Breast epithelium (tissue), 4 donors: ENCODE measurements at regions of chr1 and their contacts with region 1.

Region 1: DNA sequence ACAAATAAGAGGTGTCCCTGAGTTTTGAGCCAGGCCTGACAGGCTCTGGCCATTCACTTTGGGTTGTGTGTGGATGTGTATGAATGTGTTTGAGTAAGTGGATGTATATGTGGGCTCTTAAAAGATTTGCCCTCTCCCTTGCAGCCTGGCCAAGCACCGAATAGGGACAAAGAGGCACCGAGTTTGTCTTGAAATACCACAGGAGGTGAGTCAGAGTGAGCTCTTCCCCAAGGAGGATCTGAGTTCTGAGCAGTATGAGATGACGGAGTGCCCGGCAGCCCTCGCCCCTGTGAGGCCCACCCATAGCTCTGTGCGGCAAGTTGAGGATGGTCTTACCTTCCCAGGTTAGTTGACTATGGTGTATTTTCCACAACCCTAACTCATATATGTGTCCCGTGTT is 19.0 kb downstream of the KDM4A start:
- DNase-seq: no peak
- H3K4me3 ChIP-seq: no peak overlapping the region
- H3K27ac ChIP-seq: no peak overlapping the region
- H3K4me1 ChIP-seq: no peaks in the 10 kb centered on the region
- H3K27me3 ChIP-seq: no peaks in the 10 kb centered on the region
- CTCF ChIP-seq: no peak
- POLR2A ChIP-seq: no peak

Region 2: GRCh38 chr1:42657971-42658879 is 1010.7 kb before region 1 on chr1 and contains the start of gene PPIH:
- intact Hi-C with region 1: loop called (anchors 5 kb)
- DNase-seq: peak; percentile 91 to 95
- H3K4me3 ChIP-seq: peak within 1 kb of the TSS; percentile 76 to 86 (median 77)
- H3K27ac ChIP-seq: peak within 1 kb of the TSS; percentile 69 to 91
- H3K4me1 ChIP-seq: peaks cover 0 to 7% of the 10 kb centered on the region in 2 donors
- H3K27me3 ChIP-seq: no peaks in the 10 kb centered on the region
- CTCF ChIP-seq: peak in 2 of 3 donors; percentile 47 to 58
- POLR2A ChIP-seq: peak; percentile 14
- total RNA-seq, gene PPIH: 21.6 to 37.9 (median 24.6) TPM

Region 3: DNA sequence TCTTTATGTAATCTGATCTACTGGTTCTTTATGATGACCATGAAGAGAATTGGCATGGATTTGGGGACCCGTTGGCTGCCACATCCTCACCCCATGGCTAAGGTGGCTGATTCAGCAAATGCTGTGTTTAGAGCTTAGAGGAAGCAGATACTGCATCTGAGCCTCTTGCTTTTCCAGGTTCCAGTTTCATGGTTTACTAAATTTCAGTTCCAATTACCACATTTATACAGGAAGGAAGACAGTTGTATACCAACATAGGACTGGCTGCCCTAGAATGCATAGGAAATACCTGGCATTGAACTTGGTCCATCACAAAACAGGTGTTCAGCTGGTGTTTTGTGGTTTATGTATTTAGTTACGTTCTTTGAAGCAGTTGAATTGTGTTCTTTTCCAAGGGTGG is 145.4 kb after region 1 on chr1:
- intact Hi-C with region 1: no loop called
- DNase-seq: no peak
- H3K4me3 ChIP-seq: no peak overlapping the region
- H3K27ac ChIP-seq: no peak overlapping the region
- H3K4me1 ChIP-seq: no peaks in the 10 kb centered on the region
- H3K27me3 ChIP-seq: no peaks in the 10 kb centered on the region
- CTCF ChIP-seq: no peak
- POLR2A ChIP-seq: no peak

Region 4: GRCh38 chr1:44775078-44775929 is 1106.3 kb after region 1 on chr1 and contains the start of gene RPS8:
- intact Hi-C with region 1: no loop called
- DNase-seq: peak; percentile 89 to 93
- H3K4me3 ChIP-seq: peak within 1 kb of the TSS; percentile 81 to 87 (median 85)
- H3K27ac ChIP-seq: peak within 1 kb of the TSS; percentile 96 to 99
- H3K4me1 ChIP-seq: peaks cover 0 to 5% of the 10 kb centered on the region in 2 donors
- H3K27me3 ChIP-seq: no peaks in the 10 kb centered on the region
- CTCF ChIP-seq: peak in 1 of 3 donors; percentile 15
- POLR2A ChIP-seq: peak; percentile 97
- total RNA-seq, gene RPS8: 2,158 to 3,355 (median 2,591) TPM